ENCODE measurements at regions of chr17 and their contacts with region 1.

Region 1: GRCh38 chr17:73291260-73291801 is 20.5 kb downstream of the CDC42EP4 start:
- DNase-seq: peak; percentile 86
- H3K4me3 Mint-ChIP-seq: peak overlapping the region; percentile 52
- H3K27ac Mint-ChIP-seq: peak overlapping the region; percentile 91
- H3K4me1 Mint-ChIP-seq: peaks cover 77% of the 10 kb centered on the region
- H3K27me3 Mint-ChIP-seq: no peaks in the 10 kb centered on the region
- CTCF ChIP-seq: no peak

Region 2: GRCh38 chr17:73304971-73305812 is 13.9 kb after region 1 on chr17:
- CTCF ChIA-PET with region 1: interaction called, 12 read pairs
- intact Hi-C with region 1: loop called (anchors 1 kb)
- DNase-seq: peak; percentile 63
- H3K4me3 Mint-ChIP-seq: peak overlapping the region; percentile 62
- H3K27ac Mint-ChIP-seq: peak overlapping the region; percentile 55
- H3K4me1 Mint-ChIP-seq: peaks cover 68% of the 10 kb centered on the region
- H3K27me3 Mint-ChIP-seq: no peaks in the 10 kb centered on the region
- CTCF ChIP-seq: no peak

Region 3: GRCh38 chr17:73311781-73312641 is 20.7 kb after region 1 on chr17 and contains the start of gene CDC42EP4:
- CTCF ChIA-PET with region 1: interaction called, 12 read pairs
- intact Hi-C with region 1: loop called (anchors 1 kb)
- DNase-seq: peak; percentile 97
- H3K4me3 Mint-ChIP-seq: peak within 1 kb of the TSS; percentile 94
- H3K27ac Mint-ChIP-seq: peak within 1 kb of the TSS; percentile 93
- H3K4me1 Mint-ChIP-seq: peaks cover 27% of the 10 kb centered on the region
- H3K27me3 Mint-ChIP-seq: no peaks in the 10 kb centered on the region
- CTCF ChIP-seq: no peak
- total RNA-seq, gene CDC42EP4: 50.2 and 60.1 TPM in 2 replicates

Region 4: GRCh38 chr17:73342050-73342522 is 50.8 kb after region 1 on chr17:
- CTCF ChIA-PET with region 1: interaction called, 5 read pairs
- intact Hi-C with region 1: loop called (anchors 1 kb)
- DNase-seq: peak; percentile 87
- H3K4me3 Mint-ChIP-seq: peak overlapping the region; percentile 30
- H3K27ac Mint-ChIP-seq: peak overlapping the region; percentile 64
- H3K4me1 Mint-ChIP-seq: peaks cover 25% of the 10 kb centered on the region
- H3K27me3 Mint-ChIP-seq: no peaks in the 10 kb centered on the region
- CTCF ChIP-seq: no peak

Region 5: DNA sequence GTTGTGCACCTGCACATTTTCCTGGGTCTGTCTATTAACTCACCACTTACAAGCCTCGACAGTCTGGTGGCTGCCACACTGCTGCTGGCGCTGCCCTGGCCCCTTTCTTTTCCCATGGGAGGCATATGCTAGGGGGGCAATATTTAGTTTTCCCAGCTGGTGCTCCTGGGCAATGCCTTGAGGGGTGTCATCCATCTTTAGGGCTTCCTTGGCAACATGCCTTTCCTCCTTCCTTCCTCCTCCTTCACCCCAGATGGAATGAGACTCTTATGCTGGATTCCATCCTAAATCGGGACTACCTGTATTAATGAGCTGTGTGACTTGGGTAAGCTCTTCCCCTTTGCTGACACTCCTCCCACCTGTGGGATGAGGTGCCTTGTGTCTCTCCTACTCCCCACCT is 85.3 kb after region 1 on chr17:
- CTCF ChIA-PET with region 1: no interaction called
- intact Hi-C with region 1: no loop called
- DNase-seq: no peak
- H3K4me3 Mint-ChIP-seq: no peak overlapping the region
- H3K27ac Mint-ChIP-seq: no peak overlapping the region
- H3K4me1 Mint-ChIP-seq: peaks cover 2% of the 10 kb centered on the region
- H3K27me3 Mint-ChIP-seq: peaks cover 69% of the 10 kb centered on the region
- CTCF ChIP-seq: no peak

Region 6: DNA sequence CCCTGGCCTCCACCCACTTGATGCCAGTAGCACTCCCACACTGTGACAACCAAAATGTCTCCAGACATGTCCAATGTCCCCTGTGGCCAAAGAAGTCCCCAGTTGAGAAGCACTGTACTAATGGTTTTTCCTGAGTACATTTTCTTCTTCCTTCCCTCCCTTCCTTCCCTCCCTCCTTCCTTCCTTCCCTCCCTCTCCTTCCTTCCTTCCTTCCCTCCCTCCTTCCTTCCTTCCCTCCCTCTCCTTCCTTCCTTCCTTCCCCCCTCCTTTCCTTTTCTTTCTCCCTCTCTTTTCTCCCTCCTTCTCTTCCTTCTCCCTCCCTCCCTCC is 97.2 kb after region 1 on chr17:
- CTCF ChIA-PET with region 1: interaction called, 13 read pairs
- intact Hi-C with region 1: no loop called
- DNase-seq: no peak
- H3K4me3 Mint-ChIP-seq: no peak overlapping the region
- H3K27ac Mint-ChIP-seq: no peak overlapping the region
- H3K4me1 Mint-ChIP-seq: no peaks in the 10 kb centered on the region
- H3K27me3 Mint-ChIP-seq: peaks cover 75% of the 10 kb centered on the region
- CTCF ChIP-seq: no peak

Measured in Calu3 (cell line).